HepG2 (cell line): ENCODE measurements at regions of chr3 and their contacts with region 1.

Region 1: DNA sequence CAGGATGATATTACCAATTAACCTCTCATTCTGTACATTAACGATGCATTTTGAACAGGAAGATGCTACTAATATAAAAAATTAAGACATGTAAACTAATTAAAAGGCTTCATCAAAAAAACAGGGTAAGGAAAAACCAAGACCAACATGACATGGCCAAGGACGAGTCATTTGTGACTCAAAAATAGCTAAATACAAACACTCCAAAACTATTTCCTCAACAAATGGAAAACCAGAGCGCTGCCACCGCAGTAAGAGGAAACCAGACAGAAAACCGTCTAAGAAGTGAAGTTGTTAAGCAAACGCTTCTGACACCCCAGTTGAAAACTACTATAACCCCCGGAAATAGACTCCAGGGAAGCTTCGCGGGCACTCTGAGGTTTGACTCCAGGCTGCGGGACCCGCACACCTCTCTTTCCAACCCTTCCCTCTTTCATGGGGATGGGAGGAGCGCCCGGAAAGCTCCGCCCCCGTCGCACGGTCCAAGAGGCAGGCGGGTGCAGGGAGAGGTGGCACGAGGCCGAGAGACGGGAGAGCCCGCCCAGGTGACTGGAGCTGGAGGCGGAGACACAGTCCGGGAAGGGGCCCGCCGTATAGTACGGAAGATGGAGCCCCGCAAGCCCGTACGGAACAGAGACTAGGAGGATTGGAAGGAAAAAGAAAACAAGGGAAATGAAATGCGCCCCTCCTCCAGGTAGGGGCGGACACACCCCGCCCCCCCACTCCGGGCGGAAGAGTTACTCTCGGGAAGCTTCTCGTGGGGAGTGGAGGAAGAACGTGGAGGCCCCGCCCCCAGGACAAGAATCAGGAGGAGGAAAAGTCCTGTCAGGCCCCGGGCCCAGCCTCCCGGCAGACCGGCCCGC is 708 bp downstream of the DCAF1 start:
- DNase-seq: peak; percentile 92
- ATAC-seq: peak; percentile 86
- H3K4me3 ChIP-seq: peak overlapping the region; percentile 74 to 91 (median 82)
- H3K27ac ChIP-seq: peak overlapping the region; percentile 97
- H3K4me1 ChIP-seq: peaks cover 30% of the 10 kb centered on the region
- H3K27me3 ChIP-seq: no peaks in the 10 kb centered on the region
- CTCF ChIP-seq: no peak
- EP300 ChIP-seq: 0 out of 4 replicates have a peak, but pooled peaks of 1 of the 2 experiments have one; percentile 9
- POLR2A ChIP-seq: peak; percentile 64 to 71; a peak in 3 of 4 replicates
- RAD21 ChIP-seq: no peak

Region 2: GRCh38 chr3:51384726-51385473 is 114.2 kb before region 1 on chr3 and contains the start of gene MANF:
- CTCF ChIA-PET with region 1: no interaction called
- POLR2A ChIA-PET with region 1: interaction called, 14 read pairs
- in situ Hi-C with region 1: no loop called
- intact Hi-C with region 1: no loop called
- DNase-seq: peak; percentile 96
- ATAC-seq: peak; percentile 94
- H3K4me3 ChIP-seq: peak within 1 kb of the TSS; percentile 90 to 95 (median 92)
- H3K27ac ChIP-seq: peak within 1 kb of the TSS; percentile 96
- H3K4me1 ChIP-seq: peaks cover 55% of the 10 kb centered on the region
- H3K27me3 ChIP-seq: peaks cover 0 to 1% of the 10 kb centered on the region in 2 experiments; a peak in 1 of 5 replicates
- CTCF ChIP-seq: peak; percentile 2; the same call in 1 of the 2 replicates
- EP300 ChIP-seq: no peak
- POLR2A ChIP-seq: peak in 1 of 2 experiments; percentile 85; a peak in 2 of 4 replicates
- RAD21 ChIP-seq: peak; percentile 25; the same call in 1 of the 2 replicates
- total RNA-seq, gene MANF: 111 and 269 TPM in 2 replicates

Region 3: DNA sequence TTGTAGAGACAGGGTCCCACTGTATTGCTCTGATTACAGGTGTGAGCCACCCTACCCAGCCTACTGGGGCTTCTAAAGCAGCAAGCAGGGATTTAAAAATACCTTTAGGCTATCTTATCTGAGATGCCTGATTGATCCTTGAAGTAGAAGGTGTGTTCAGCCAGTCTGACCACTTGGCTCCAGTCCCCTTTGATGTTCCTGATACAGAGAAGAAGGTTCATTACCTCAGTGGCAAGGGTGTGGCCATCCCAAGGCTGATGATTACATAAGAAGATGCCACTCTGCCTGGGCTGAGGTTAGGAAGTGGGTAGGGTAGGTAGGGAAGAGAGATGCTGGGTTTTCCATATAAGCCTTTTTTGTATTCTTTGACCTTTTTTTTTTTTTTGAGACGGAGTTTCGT is 11.9 kb after region 1 on chr3:
- CTCF ChIA-PET with region 1: no interaction called
- POLR2A ChIA-PET with region 1: interaction called, 15 read pairs
- in situ Hi-C with region 1: no loop called
- intact Hi-C with region 1: no loop called
- DNase-seq: no peak
- ATAC-seq: no peak
- H3K4me3 ChIP-seq: no peak overlapping the region
- H3K27ac ChIP-seq: no peak overlapping the region
- H3K4me1 ChIP-seq: peaks cover 34% of the 10 kb centered on the region
- H3K27me3 ChIP-seq: no peaks in the 10 kb centered on the region; a peak in 1 of 5 replicates
- CTCF ChIP-seq: no peak
- EP300 ChIP-seq: no peak
- POLR2A ChIP-seq: no peak
- RAD21 ChIP-seq: no peak

Region 4: DNA sequence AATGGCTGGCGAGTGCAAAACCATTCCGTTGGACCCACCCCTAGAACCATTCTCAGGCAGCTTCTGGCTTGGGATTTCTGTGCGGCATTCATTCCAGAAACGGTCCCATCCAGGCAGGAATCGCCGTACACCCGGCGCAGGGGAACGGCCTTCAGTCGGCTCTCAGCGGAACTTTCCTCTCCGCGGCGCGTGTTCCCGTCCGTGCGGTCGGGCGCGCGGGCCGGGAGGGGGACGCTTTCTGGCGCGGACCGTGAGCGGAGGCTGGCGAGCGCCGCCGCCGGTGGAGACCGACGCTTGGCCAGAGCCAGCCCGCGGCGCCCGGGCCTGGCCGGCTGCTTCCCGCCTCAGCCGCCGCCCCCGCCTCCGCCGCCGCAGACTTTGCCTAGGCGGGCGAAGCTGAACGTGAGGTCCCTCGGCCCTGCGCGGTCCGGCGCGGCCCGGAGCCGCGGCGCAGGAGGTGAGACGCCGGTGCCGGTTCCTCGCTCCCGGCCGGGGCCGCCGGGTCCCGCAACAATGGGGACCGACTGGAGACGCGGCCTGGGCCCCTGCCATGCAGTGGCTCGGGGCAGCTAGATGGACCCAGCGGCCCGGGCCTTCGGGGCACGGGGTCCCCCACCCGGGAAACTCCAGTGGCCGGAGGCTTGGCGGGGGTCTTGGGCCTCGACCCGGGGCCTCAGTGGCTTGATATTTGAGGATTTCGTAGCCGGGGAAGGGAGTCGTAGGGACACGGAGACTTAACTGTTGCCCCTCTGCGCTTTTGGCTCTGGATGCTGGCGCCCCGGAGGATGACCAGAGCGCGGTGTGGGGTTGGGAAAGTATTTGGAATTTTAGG is 39.6 kb after region 1 on chr3 and contains the start of gene RAD54L2:
- CTCF ChIA-PET with region 1: no interaction called
- POLR2A ChIA-PET with region 1: interaction called, 27 read pairs
- in situ Hi-C with region 1: no loop called
- intact Hi-C with region 1: loop called (anchors 1 kb)
- DNase-seq: peak; percentile 61
- ATAC-seq: peak; percentile 93
- H3K4me3 ChIP-seq: peak within 1 kb of the TSS; percentile 90 to 99 (median 95)
- H3K27ac ChIP-seq: peak within 1 kb of the TSS; percentile 85
- H3K4me1 ChIP-seq: peaks cover 54% of the 10 kb centered on the region
- H3K27me3 ChIP-seq: no peaks in the 10 kb centered on the region; a peak in 1 of 5 replicates
- CTCF ChIP-seq: peak; percentile 72
- EP300 ChIP-seq: peak in 1 of 2 experiments; percentile 54; a peak in 2 of 4 replicates
- POLR2A ChIP-seq: peak in 1 of 2 experiments; percentile 73; a peak in 3 of 4 replicates
- RAD21 ChIP-seq: peak; percentile 78
- total RNA-seq, gene RAD54L2: 14.4 and 14.8 TPM in 2 replicates

Region 5: DNA sequence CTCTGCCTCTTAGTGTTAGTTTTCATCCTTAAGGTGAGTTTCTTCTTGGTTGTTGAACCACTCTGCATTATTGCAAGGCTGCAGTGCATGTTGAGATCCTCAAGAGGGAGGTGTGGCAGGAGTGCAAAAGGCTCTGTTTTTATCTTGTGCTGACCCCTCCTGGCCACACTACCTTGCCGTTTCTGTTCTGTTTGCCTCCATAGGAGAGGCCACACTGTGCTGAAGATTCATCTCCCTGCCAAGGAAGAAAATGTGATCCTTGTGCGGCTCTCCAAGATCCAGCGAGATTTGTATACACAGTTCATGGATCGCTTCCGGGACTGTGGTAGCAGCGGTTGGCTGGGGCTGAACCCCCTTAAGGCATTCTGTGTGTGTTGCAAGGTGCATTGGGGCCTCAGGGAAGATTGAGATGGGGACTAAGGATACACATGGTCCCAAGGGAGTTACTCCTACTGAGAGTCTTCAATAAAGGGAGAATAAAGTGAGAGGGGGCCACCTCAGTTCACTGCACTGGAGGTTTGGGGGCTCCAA is 138.9 kb after region 1 on chr3:
- CTCF ChIA-PET with region 1: interaction called, 47 read pairs
- POLR2A ChIA-PET with region 1: no interaction called
- in situ Hi-C with region 1: loop called (anchors 5 kb)
- intact Hi-C with region 1: loop called (anchors 1 kb)
- DNase-seq: peak; percentile 74
- ATAC-seq: peak; percentile 99
- H3K4me3 ChIP-seq: no peak overlapping the region
- H3K27ac ChIP-seq: no peak overlapping the region
- H3K4me1 ChIP-seq: no peaks in the 10 kb centered on the region
- H3K27me3 ChIP-seq: no peaks in the 10 kb centered on the region
- CTCF ChIP-seq: peak; percentile 90
- EP300 ChIP-seq: no peak
- POLR2A ChIP-seq: no peak
- RAD21 ChIP-seq: peak; percentile 85

Region 6: DNA sequence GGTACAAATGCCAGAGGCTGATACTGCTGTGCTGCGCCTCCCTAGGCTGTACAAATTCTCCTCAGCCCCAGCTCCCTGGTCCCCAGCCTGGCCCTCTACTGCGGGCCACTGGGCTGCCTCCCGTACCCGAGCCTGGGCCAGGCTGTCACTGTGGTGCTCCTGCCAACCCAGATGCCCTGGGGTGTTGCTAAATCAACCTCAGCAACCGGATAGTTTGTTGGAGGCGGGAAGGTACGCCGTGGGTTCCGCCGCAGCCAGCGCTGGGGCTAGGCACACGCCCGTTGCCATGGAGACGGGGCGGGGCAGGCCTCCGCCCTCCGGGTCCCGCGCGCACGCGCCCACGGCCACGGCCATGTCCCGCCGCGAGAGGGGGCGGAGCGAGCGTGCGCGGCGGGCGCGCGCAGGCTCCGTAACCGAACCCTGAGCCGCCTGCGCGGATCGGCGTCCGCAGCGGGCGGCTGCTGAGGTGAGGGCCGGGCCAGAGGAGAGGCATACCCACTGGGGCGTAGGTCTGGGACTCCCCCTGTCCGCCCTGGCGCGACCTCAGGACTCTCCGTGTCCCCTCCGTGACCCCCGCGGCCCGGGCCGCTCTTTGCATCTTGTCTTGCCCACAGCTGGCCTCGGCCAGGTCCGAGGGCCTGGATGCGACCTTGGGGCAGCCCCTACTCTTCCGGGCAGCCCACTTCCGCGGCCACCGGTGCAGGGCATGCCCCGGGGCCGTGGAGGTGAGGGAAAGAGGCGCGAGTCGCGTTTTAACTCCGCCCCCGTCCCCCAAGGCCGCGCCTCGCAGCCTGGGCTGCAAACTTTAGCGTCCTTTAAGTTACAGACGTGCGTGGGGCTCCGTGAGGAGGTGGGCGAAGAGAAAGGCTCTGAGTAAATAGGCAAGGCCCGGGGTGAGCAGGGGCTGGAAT is 172.0 kb after region 1 on chr3 and contains the start of gene TEX264:
- CTCF ChIA-PET with region 1: interaction called, 12 read pairs
- POLR2A ChIA-PET with region 1: interaction called, 44 read pairs
- in situ Hi-C with region 1: loop called (anchors 5 kb)
- intact Hi-C with region 1: loop called (anchors 1 kb)
- DNase-seq: peak; percentile 59
- ATAC-seq: peak; percentile 76
- H3K4me3 ChIP-seq: peak within 1 kb of the TSS; percentile 79 to 99 (median 80)
- H3K27ac ChIP-seq: peak within 1 kb of the TSS; percentile 89
- H3K4me1 ChIP-seq: peaks cover 44% of the 10 kb centered on the region
- H3K27me3 ChIP-seq: no peaks in the 10 kb centered on the region
- CTCF ChIP-seq: 0 out of 2 replicates have a peak, but pooled peaks have one; percentile 6
- EP300 ChIP-seq: no peak
- POLR2A ChIP-seq: peak; percentile 76 to 89
- RAD21 ChIP-seq: peak; percentile 43; the same call in 1 of the 2 replicates
- total RNA-seq, gene TEX264: 18.8 and 35.2 TPM in 2 replicates

Region 7: GRCh38 chr3:51682079-51682478 is 183.0 kb after region 1 on chr3:
- CTCF ChIA-PET with region 1: interaction called, 10 read pairs
- POLR2A ChIA-PET with region 1: interaction called, 5 read pairs
- in situ Hi-C with region 1: no loop called
- intact Hi-C with region 1: no loop called
- DNase-seq: peak; percentile 81
- ATAC-seq: peak; percentile 93
- H3K4me3 ChIP-seq: no peak overlapping the region
- H3K27ac ChIP-seq: no peak overlapping the region
- H3K4me1 ChIP-seq: 0 out of 2 replicates have a peak, but pooled peaks cover 12% of the 10 kb centered on the region
- H3K27me3 ChIP-seq: no peaks in the 10 kb centered on the region
- CTCF ChIP-seq: peak; percentile 92
- EP300 ChIP-seq: no peak
- POLR2A ChIP-seq: no peak
- RAD21 ChIP-seq: peak; percentile 73